GM12878 (cell line): ENCODE measurements at regions of chr3 and their contacts with region 1.

Region 1: GRCh38 chr3:124768812-124769211 is 38.6 kb downstream of the UMPS start:
- DNase-seq: no peak
- ATAC-seq: peak; percentile 93
- H3K4me3 ChIP-seq: no peak overlapping the region
- H3K27ac ChIP-seq: no peak overlapping the region
- H3K4me1 ChIP-seq: peaks cover 27% of the 10 kb centered on the region
- H3K27me3 ChIP-seq: no peaks in the 10 kb centered on the region; a peak in 2 of 4 replicates
- CTCF ChIP-seq: peak; percentile 63 to 71 (median 65)
- EP300 ChIP-seq: no peak
- POLR2A ChIP-seq: no peak
- RAD21 ChIP-seq: peak; percentile 53

Region 2: DNA sequence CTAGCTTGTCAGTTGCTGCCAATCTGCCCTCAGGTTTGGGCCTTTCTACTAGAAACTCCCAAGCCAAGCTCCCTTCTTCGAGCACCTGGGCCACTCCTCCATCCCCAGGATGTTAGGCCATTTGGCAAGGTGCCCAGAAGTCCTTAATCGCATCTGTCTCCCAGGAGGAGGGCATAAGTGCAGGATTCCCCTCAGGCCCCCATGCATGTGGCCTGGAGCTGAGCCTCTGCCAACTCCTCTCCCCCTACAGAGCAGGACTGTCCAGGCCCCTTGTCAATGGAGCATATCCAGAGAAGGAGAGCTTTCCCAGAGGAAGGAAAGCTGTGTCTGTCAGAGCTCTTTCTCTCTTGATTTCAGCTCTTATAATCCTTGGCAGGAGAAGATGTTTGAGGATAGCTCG is 594.3 kb before region 1 on chr3:
- CTCF ChIA-PET with region 1: no interaction called
- POLR2A ChIA-PET with region 1: no interaction called
- RAD21 ChIA-PET with region 1: no interaction called
- SMC1A ChIA-PET with region 1: no interaction called
- in situ Hi-C with region 1: no loop called
- intact Hi-C with region 1: no loop called
- DNase-seq: no peak
- ATAC-seq: no peak
- H3K4me3 ChIP-seq: no peak overlapping the region
- H3K27ac ChIP-seq: no peak overlapping the region
- H3K4me1 ChIP-seq: no peaks in the 10 kb centered on the region
- H3K27me3 ChIP-seq: no peaks in the 10 kb centered on the region
- CTCF ChIP-seq: no peak
- EP300 ChIP-seq: no peak
- POLR2A ChIP-seq: no peak
- RAD21 ChIP-seq: no peak

Region 3: DNA sequence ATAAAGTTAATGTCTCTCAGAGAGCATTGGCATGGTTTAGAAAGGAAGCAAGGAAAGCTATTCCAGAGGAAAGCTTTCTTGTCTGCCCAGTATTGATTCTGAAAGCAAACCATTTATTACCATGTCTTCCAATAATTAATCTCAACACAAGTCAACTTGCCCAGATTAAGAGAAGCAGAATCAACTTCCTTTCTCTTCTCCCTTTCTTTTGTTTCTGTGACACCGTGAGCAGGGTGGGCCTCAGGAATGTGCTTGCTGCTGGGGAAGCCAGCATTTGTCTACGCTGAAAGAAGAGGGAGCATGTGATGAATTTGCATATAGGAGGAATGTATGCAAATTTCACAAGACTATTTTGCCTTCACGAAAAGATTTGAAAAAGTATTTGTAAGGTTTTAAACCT is 408.2 kb before region 1 on chr3:
- CTCF ChIA-PET with region 1: no interaction called
- POLR2A ChIA-PET with region 1: no interaction called
- RAD21 ChIA-PET with region 1: no interaction called
- SMC1A ChIA-PET with region 1: no interaction called
- in situ Hi-C with region 1: no loop called
- intact Hi-C with region 1: no loop called
- DNase-seq: no peak
- ATAC-seq: no peak
- H3K4me3 ChIP-seq: no peak overlapping the region
- H3K27ac ChIP-seq: no peak overlapping the region
- H3K4me1 ChIP-seq: no peaks in the 10 kb centered on the region
- H3K27me3 ChIP-seq: peaks cover 0 to 2% of the 10 kb centered on the region in 2 experiments; a peak in 2 of 4 replicates
- CTCF ChIP-seq: no peak
- EP300 ChIP-seq: no peak
- POLR2A ChIP-seq: no peak
- RAD21 ChIP-seq: no peak

Region 4: GRCh38 chr3:124780761-124781475 is 12.1 kb after region 1 on chr3:
- CTCF ChIA-PET with region 1: interaction called, 96 read pairs
- POLR2A ChIA-PET with region 1: interaction called, 5 read pairs
- RAD21 ChIA-PET with region 1: interaction called, 41 read pairs
- SMC1A ChIA-PET with region 1: interaction called, 88 read pairs
- in situ Hi-C with region 1: no loop called
- intact Hi-C with region 1: no loop called
- DNase-seq: no peak
- ATAC-seq: no peak; the same call in 2 of the 3 replicates
- H3K4me3 ChIP-seq: no peak overlapping the region
- H3K27ac ChIP-seq: no peak overlapping the region
- H3K4me1 ChIP-seq: peaks cover 20% of the 10 kb centered on the region
- H3K27me3 ChIP-seq: no peaks in the 10 kb centered on the region
- CTCF ChIP-seq: no peak
- EP300 ChIP-seq: no peak
- POLR2A ChIP-seq: no peak
- RAD21 ChIP-seq: no peak

Region 5: DNA sequence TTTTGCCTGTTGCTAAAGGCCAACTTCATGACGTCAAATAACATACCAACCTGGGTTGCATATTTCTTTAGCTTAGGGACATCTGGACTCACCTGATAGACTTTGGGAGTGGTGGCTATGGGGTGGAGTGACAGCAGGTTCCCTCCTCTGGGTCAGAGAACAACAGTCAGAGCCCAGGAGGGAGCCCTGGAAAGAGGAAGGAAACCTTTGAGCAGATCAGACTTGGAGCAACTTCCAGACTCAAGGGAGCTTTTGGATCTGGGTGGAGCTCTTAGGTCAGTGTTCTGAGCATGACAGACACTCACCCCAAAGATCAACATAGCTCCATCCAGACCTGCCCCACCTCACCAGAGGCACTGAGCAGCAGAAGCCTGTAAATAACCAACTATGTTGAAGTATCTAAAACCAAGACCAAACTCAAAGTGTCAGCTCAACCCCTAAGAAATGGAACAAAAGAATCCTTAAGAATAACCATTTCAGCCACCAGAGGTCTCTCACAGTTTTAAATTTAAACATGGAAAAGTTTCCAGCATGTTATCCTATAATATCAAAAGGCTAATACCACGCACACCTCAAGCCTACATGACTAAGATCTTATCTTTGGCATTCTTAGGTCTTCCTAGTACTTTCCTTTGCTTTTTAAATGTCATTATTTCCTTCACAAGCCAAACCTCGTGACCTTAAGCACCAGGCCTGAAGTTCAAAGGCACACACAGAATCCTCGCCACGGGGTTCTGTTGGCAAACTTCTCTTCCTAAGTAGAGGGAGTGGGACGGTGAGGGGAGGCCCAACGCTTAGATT is 17.8 kb after region 1 on chr3:
- CTCF ChIA-PET with region 1: interaction called, 96 read pairs
- POLR2A ChIA-PET with region 1: interaction called, 5 read pairs
- RAD21 ChIA-PET with region 1: interaction called, 41 read pairs
- SMC1A ChIA-PET with region 1: interaction called, 88 read pairs
- in situ Hi-C with region 1: no loop called
- intact Hi-C with region 1: no loop called
- DNase-seq: no peak
- ATAC-seq: no peak
- H3K4me3 ChIP-seq: no peak overlapping the region
- H3K27ac ChIP-seq: no peak overlapping the region
- H3K4me1 ChIP-seq: peaks cover 15% of the 10 kb centered on the region
- H3K27me3 ChIP-seq: no peaks in the 10 kb centered on the region
- CTCF ChIP-seq: peak in 1 of 3 experiments; percentile 18; a peak in 1 of 6 replicates
- EP300 ChIP-seq: no peak
- POLR2A ChIP-seq: no peak
- RAD21 ChIP-seq: no peak

Region 6: DNA sequence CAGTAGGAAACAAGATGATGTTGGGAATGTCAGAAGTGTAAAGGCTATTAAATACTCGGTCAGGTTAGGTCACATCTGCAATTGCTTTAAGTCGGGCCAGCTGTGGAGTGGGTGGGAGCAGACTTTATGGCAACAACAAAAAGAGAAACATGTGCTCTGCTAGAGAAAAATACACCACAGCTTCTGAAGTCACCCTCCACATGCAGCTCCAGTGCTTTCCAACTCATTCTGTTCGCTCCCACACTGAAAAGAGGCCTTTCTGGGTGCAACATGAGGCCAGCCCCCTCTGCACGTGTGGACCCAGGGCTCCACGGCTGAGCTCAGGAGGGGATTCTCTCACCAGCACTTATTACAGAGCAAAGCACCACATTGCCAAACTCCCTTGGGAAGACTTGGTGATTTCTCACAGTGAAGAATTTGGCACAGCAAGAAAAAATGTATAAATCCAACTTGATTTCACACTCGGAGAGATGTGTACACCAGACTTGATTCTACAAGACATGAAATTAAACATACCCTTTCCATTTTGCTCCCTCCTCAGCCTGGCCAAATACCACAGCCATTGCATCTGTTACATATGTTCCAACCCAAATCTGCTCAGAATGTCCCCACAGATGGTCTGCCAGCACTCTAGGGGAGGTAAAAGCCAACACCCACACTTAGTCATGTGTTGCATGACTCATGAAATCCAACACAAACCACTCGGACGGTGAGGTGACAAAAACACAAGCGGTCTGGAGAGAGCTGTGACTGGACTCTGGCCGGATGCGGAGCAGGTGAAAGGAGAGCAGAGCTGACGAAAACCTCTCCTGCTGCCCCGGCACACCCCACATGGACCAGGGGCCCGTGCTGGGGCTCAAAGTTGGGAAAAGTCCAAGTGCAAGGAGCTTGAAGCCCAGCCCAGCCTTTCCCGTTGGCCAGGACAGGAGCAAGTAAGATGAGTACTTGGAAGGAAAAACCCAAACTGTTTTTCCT is 43.8 kb after region 1 on chr3:
- CTCF ChIA-PET with region 1: interaction called, 11 read pairs
- POLR2A ChIA-PET with region 1: no interaction called
- RAD21 ChIA-PET with region 1: interaction called, 12 read pairs
- SMC1A ChIA-PET with region 1: interaction called, 9 read pairs
- in situ Hi-C with region 1: no loop called
- intact Hi-C with region 1: no loop called
- DNase-seq: no peak
- ATAC-seq: peak; percentile 90
- H3K4me3 ChIP-seq: no peak overlapping the region
- H3K27ac ChIP-seq: no peak overlapping the region
- H3K4me1 ChIP-seq: no peaks in the 10 kb centered on the region
- H3K27me3 ChIP-seq: no peaks in the 10 kb centered on the region; a peak in 2 of 4 replicates
- CTCF ChIP-seq: no peak
- EP300 ChIP-seq: no peak
- POLR2A ChIP-seq: no peak
- RAD21 ChIP-seq: no peak

Region 7: GRCh38 chr3:124895756-124896155 is 126.9 kb after region 1 on chr3:
- CTCF ChIA-PET with region 1: interaction called, 551 read pairs
- POLR2A ChIA-PET with region 1: interaction called, 3 read pairs
- RAD21 ChIA-PET with region 1: interaction called, 174 read pairs
- SMC1A ChIA-PET with region 1: interaction called, 242 read pairs
- in situ Hi-C with region 1: loop called (anchors 5 kb)
- intact Hi-C with region 1: no loop called
- DNase-seq: no peak
- ATAC-seq: no peak
- H3K4me3 ChIP-seq: no peak overlapping the region
- H3K27ac ChIP-seq: no peak overlapping the region
- H3K4me1 ChIP-seq: no peaks in the 10 kb centered on the region; the same call in 1 of the 2 replicates
- H3K27me3 ChIP-seq: no peaks in the 10 kb centered on the region
- CTCF ChIP-seq: no peak
- EP300 ChIP-seq: no peak
- POLR2A ChIP-seq: no peak
- RAD21 ChIP-seq: no peak

Region 8: DNA sequence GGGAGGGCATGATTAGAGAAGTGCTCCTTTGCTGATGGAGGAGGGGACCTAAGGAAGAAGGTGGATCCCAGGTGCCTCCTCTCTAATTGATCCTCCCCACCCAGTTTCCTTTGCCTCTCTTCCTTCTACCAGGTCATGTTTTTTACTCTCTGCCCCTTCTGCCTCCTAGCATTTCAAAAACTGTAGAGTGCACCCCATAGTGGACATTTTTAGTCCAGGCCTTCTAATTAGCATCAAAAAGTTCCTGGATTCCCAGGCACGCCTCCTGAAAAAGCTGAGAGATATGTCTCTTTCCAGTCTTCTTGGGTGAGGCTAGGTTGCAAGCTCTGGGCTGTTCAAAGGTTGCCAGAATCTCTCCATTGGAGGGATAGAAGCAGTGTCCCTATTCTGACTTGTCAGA is 137.0 kb after region 1 on chr3:
- CTCF ChIA-PET with region 1: interaction called, 551 read pairs
- POLR2A ChIA-PET with region 1: interaction called, 4 read pairs
- RAD21 ChIA-PET with region 1: interaction called, 174 read pairs
- SMC1A ChIA-PET with region 1: interaction called, 242 read pairs
- in situ Hi-C with region 1: loop called (anchors 5 kb)
- intact Hi-C with region 1: loop called (anchors 1 kb)
- DNase-seq: no peak
- ATAC-seq: no peak
- H3K4me3 ChIP-seq: no peak overlapping the region
- H3K27ac ChIP-seq: no peak overlapping the region
- H3K4me1 ChIP-seq: no peaks in the 10 kb centered on the region
- H3K27me3 ChIP-seq: no peaks in the 10 kb centered on the region; a peak in 2 of 4 replicates
- CTCF ChIP-seq: no peak
- EP300 ChIP-seq: no peak
- POLR2A ChIP-seq: no peak
- RAD21 ChIP-seq: no peak

Region 9: GRCh38 chr3:125119752-125120378 is 351.1 kb after region 1 on chr3:
- CTCF ChIA-PET with region 1: no interaction called
- POLR2A ChIA-PET with region 1: no interaction called
- RAD21 ChIA-PET with region 1: no interaction called
- SMC1A ChIA-PET with region 1: no interaction called
- in situ Hi-C with region 1: no loop called
- intact Hi-C with region 1: no loop called
- DNase-seq: peak; percentile 87
- ATAC-seq: peak; percentile 80
- H3K4me3 ChIP-seq: peak overlapping the region; percentile 60
- H3K27ac ChIP-seq: peak overlapping the region; percentile 97
- H3K4me1 ChIP-seq: peaks cover 76% of the 10 kb centered on the region
- H3K27me3 ChIP-seq: no peaks in the 10 kb centered on the region
- CTCF ChIP-seq: no peak
- EP300 ChIP-seq: peak; percentile 18 to 68; a peak in 1 of 4 replicates
- POLR2A ChIP-seq: no peak; the same call in 1 of the 2 replicates
- RAD21 ChIP-seq: no peak